Panc1 (cell line): ENCODE measurements at regions of chr17 and their contacts with region 1.

Region 1: DNA sequence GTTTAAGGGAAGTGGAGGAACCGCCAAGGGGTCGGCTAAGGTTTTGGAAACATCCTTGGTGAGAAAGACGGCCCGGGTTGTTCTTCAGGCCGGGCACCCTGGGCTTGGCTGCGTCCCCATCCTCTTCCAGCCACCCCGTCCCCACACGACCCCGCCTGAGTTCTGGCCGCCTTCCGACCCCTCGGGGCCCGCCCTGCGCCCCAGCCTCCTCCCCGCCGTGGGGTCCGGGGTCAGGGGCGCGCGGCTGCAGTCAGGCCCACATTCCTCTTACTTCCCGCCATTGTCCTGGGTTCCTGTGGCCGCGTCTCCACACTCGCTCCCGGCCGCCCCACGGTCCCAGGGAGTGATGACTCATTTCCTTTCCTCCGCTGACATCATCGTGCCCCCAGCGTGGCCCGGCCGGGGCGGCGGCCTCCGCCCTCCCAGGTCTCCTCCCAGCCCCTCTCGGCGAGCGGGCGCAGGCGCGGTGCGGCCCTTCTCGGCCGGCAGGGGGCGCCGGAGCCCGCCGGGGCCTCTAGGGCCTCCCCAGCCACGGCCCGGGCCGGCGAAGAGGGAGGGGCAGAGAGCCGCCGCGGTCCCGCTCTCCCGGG is 59.6 kb downstream of the WSB1 start:
- DNase-seq: peak; percentile 61
- ATAC-seq: peak; percentile 92
- H3K4me3 ChIP-seq: peak overlapping the region; percentile 66 to 69
- H3K27ac ChIP-seq: peak overlapping the region; percentile 95
- H3K4me1 ChIP-seq: peaks cover 26% of the 10 kb centered on the region
- H3K27me3 ChIP-seq: no peaks in the 10 kb centered on the region
- CTCF ChIP-seq: peak; percentile 99

Region 2: DNA sequence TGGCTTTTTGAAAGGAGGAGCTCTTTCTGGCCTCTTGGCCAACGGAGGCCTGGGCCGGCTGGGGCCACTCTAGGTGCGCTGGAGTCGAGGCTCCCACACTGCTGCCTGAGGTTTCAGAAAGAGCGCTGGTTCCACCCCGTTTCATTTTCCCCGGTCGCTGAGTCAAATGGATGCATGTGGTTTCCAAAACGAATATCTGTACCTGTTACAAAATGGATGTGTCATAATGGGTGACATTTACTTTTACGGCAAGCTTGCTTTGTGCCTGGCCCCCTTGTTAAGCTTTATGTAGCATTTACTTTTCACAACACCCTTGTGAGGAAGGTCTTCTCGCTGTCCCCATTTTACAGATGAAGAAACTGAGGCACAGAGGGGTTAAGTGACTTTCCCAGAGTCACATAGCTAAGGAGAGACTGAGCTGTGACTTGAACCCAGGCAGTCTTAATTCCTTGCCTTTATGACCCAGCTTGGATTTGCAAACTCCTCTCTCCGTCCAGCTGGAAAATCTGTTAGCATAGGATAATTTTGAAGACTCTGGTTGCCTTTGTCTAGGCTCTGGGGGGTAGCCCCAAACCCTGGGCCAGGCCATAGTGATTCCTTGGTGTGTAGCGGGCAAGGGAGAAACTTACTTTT is 113.3 kb after region 1 on chr17:
- CTCF ChIA-PET with region 1: no interaction called
- POLR2A ChIA-PET with region 1: no interaction called
- in situ Hi-C with region 1: no loop called
- intact Hi-C with region 1: loop called (anchors 10 kb)
- DNase-seq: no peak
- ATAC-seq: no peak
- H3K4me3 ChIP-seq: no peak overlapping the region
- H3K27ac ChIP-seq: no peak overlapping the region
- H3K4me1 ChIP-seq: peaks cover 5% of the 10 kb centered on the region
- H3K27me3 ChIP-seq: no peaks in the 10 kb centered on the region
- CTCF ChIP-seq: no peak

Region 3: GRCh38 chr17:27846042-27846655 is 492.6 kb after region 1 on chr17:
- CTCF ChIA-PET with region 1: no interaction called
- POLR2A ChIA-PET with region 1: no interaction called
- in situ Hi-C with region 1: no loop called
- intact Hi-C with region 1: no loop called
- DNase-seq: no peak
- ATAC-seq: no peak
- H3K4me3 ChIP-seq: no peak overlapping the region
- H3K27ac ChIP-seq: no peak overlapping the region
- H3K4me1 ChIP-seq: no peaks in the 10 kb centered on the region
- H3K27me3 ChIP-seq: peaks cover 8% of the 10 kb centered on the region
- CTCF ChIP-seq: no peak